Panc1 (cell line): ENCODE measurements at regions of chr22 and their contacts with region 1.

Region 1: DNA sequence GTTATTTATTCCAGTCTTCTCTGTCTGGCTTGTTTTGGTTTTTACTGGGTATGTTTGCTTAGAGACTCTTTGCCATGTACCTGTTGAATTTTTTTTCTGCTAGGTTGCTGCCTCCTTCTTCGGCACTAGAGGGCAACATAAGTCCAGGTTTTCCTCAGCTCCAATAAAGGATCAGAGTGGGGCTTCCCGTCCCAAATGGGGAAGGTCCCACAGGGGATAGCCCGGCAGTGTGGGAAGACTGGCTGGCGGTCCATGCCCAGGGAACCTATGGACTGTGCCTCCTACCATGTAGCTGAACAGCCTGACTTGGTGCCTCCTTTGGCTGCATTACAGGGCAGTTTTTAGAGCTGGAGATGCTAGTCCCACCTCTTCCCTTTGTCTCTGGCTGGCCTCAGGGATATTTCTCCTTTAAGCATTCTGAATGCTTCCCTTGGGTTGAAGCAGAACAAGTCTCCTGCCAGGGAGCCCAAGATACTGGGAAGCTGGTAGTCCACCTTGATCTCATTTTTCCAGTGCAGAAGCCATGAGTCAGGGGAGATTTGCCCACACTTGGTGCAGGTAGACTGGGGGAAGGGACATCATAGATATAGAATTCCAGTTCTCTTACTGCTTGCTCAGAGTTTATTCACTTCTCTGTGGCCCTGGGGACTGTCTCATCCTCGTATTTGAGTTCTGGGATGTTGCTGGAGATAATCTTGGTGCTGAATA is 60.2 kb downstream of the BRD1 start:
- DNase-seq: peak; percentile 28
- ATAC-seq: peak; percentile 69
- H3K4me3 ChIP-seq: no peak overlapping the region
- H3K27ac ChIP-seq: no peak overlapping the region
- H3K4me1 ChIP-seq: no peaks in the 10 kb centered on the region
- H3K27me3 ChIP-seq: no peaks in the 10 kb centered on the region
- CTCF ChIP-seq: peak; percentile 79

Region 2: GRCh38 chr22:49917974-49918910 is 150.7 kb after region 1 on chr22 and contains the starts of genes ALG12 and CRELD2:
- CTCF ChIA-PET with region 1: interaction called, 3 read pairs
- POLR2A ChIA-PET with region 1: no interaction called
- in situ Hi-C with region 1: no loop called
- intact Hi-C with region 1: loop called (anchors 5 kb)
- DNase-seq: no peak
- ATAC-seq: peak; percentile 99
- H3K4me3 ChIP-seq: peak within 1 kb of the TSS; percentile 61 to 68
- H3K27ac ChIP-seq: peak within 1 kb of the TSS; percentile 63
- H3K4me1 ChIP-seq: peaks cover 3% of the 10 kb centered on the region; the same call in 1 of the 2 replicates
- H3K27me3 ChIP-seq: no peaks in the 10 kb centered on the region
- CTCF ChIP-seq: no peak
- total RNA-seq, gene ALG12: 23.4 TPM
- total RNA-seq, gene CRELD2: 59.7 TPM